Common myeloid progenitor, CD34-positive (primary cell): ENCODE measurements at regions of chr6 and their contacts with region 1.

Region 1: DNA sequence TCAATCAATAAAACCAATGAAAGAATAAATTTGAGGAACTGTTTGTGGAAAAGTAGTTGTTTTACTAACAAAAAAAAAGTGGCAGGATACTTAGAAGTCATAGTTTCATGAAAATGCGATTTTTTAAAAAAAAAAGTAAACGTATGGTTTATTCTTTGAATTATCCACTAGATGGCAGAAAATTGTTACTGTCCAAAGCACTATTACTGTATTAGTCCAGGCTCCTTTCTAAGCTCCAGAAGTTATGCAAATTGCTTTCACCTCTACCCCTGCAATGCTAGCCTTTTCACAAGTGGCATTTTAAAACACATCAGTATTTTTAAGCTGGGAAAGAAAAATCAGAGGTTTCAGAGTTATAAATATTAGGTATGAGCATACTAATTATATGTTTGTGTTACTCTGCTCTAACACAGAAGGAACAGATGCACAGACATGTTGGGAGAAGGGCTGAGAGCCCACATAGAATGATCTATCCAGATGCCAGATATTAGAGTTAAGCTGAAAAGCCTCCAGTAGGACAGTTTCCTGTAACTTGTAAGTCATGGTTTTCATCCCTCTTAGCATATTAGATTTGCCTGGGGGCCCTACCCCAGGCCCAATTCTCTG is 63.9 kb downstream of the FHL5 start:
- DNase-seq: peak; percentile 32 to 60 (median 57)
- H3K4me3 ChIP-seq: no peak overlapping the region
- H3K27ac ChIP-seq: no peak overlapping the region
- H3K4me1 ChIP-seq: no peaks in the 10 kb centered on the region
- H3K27me3 ChIP-seq: peaks cover 0 to 3% (median 0%) of the 10 kb centered on the region in 5 experiments

Region 2: GRCh38 chr6:97059473-97059872 is 432.6 kb after region 1 on chr6:
- CTCF ChIA-PET with region 1: interaction called, 26 read pairs
- POLR2A ChIA-PET with region 1: no interaction called
- DNase-seq: peak; percentile 39 to 69 (median 68)
- H3K4me3 ChIP-seq: no peak overlapping the region
- H3K27ac ChIP-seq: no peak overlapping the region
- H3K4me1 ChIP-seq: no peaks in the 10 kb centered on the region
- H3K27me3 ChIP-seq: peaks cover 0 to 2% (median 0%) of the 10 kb centered on the region in 5 experiments